CD8-positive, alpha-beta T cell (primary cell): ENCODE measurements at regions of chr3 and their contacts with region 1.

Region 1: GRCh38 chr3:138594150-138594934 is at the start of gene CEP70:
- DNase-seq: peak; percentile 83 to 96 (median 91)
- ATAC-seq: peak; percentile 93
- H3K4me3 ChIP-seq: peak within 1 kb of the TSS; percentile 83 to 93
- H3K4me3 Mint-ChIP-seq: peak within 1 kb of the TSS; percentile 94
- H3K27ac ChIP-seq: peak within 1 kb of the TSS; percentile 90 to 95
- H3K27ac Mint-ChIP-seq: peak within 1 kb of the TSS; percentile 99
- H3K4me1 ChIP-seq: no peaks in the 10 kb centered on the region
- H3K4me1 Mint-ChIP-seq: peaks cover 14% of the 10 kb centered on the region
- H3K27me3 ChIP-seq: no peaks in the 10 kb centered on the region
- H3K27me3 Mint-ChIP-seq: no peaks in the 10 kb centered on the region
- CTCF ChIP-seq: peak; percentile 86
- total RNA-seq, gene CEP70: 29.5 to 31.0 TPM

Region 2: GRCh38 chr3:136861890-136862616 is 1732.3 kb before region 1 on chr3 and contains the start of gene NCK1:
- CTCF ChIA-PET with region 1: no interaction called
- POLR2A ChIA-PET with region 1: no interaction called
- intact Hi-C with region 1: loop called in 1 of 2 experiments (anchors 10 kb)
- DNase-seq: peak; percentile 97 to 100 (median 99)
- ATAC-seq: peak; percentile 93
- H3K4me3 ChIP-seq: peak within 1 kb of the TSS; percentile 76 to 92
- H3K4me3 Mint-ChIP-seq: peak within 1 kb of the TSS; percentile 90
- H3K27ac ChIP-seq: peak within 1 kb of the TSS; percentile 86 to 96
- H3K27ac Mint-ChIP-seq: peak within 1 kb of the TSS; percentile 98
- H3K4me1 ChIP-seq: peaks cover 23% of the 10 kb centered on the region
- H3K4me1 Mint-ChIP-seq: peaks cover 63% of the 10 kb centered on the region
- H3K27me3 ChIP-seq: no peaks in the 10 kb centered on the region
- H3K27me3 Mint-ChIP-seq: no peaks in the 10 kb centered on the region
- CTCF ChIP-seq: no peak
- total RNA-seq, gene NCK1: 54.8 to 68.7 TPM

Region 3: GRCh38 chr3:138329127-138329983 is 265.0 kb before region 1 on chr3 and contains the start of gene NME9:
- CTCF ChIA-PET with region 1: interaction called, 5 read pairs
- POLR2A ChIA-PET with region 1: no interaction called
- intact Hi-C with region 1: loop called (anchors 1 to 5 kb)
- DNase-seq: peak; percentile 82 to 96 (median 92)
- ATAC-seq: peak; percentile 89
- H3K4me3 ChIP-seq: peak within 1 kb of the TSS; percentile 65 to 78
- H3K4me3 Mint-ChIP-seq: peak within 1 kb of the TSS; percentile 98
- H3K27ac ChIP-seq: peak within 1 kb of the TSS; percentile 62 to 74
- H3K27ac Mint-ChIP-seq: peak within 1 kb of the TSS; percentile 94
- H3K4me1 ChIP-seq: peaks cover 6% of the 10 kb centered on the region
- H3K4me1 Mint-ChIP-seq: peaks cover 27% of the 10 kb centered on the region
- H3K27me3 ChIP-seq: no peaks in the 10 kb centered on the region
- H3K27me3 Mint-ChIP-seq: no peaks in the 10 kb centered on the region
- CTCF ChIP-seq: peak; percentile 67
- total RNA-seq, gene NME9: 1.2 TPM in 1 of 2 experiments, not detected in the other

Region 4: GRCh38 chr3:138468886-138469285 is 125.5 kb before region 1 on chr3:
- CTCF ChIA-PET with region 1: no interaction called
- POLR2A ChIA-PET with region 1: no interaction called
- intact Hi-C with region 1: no loop called
- DNase-seq: no peak
- ATAC-seq: no peak
- H3K4me3 ChIP-seq: no peak overlapping the region
- H3K4me3 Mint-ChIP-seq: no peak overlapping the region
- H3K27ac ChIP-seq: no peak overlapping the region
- H3K27ac Mint-ChIP-seq: no peak overlapping the region
- H3K4me1 ChIP-seq: no peaks in the 10 kb centered on the region
- H3K4me1 Mint-ChIP-seq: no peaks in the 10 kb centered on the region
- H3K27me3 ChIP-seq: no peaks in the 10 kb centered on the region
- H3K27me3 Mint-ChIP-seq: no peaks in the 10 kb centered on the region
- CTCF ChIP-seq: no peak

Region 5: DNA sequence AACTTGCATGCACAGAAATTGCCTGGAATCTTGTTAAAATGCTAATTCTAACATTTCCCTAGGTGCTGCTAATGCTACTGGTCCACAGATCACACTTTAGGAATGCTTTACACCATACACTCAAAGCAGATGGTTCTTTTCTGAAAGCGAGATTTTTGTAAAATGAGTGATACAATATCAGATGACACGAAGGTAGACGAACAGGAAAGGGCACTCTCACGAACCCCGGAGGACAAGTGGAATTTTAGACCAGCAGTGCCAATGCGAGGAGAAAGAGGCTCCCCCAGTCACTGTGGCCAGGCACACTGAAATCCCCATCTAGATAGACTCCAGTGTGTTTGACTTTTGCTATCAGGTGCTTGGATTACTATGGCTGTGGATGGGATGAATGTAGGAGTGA is 35.2 kb after region 1 on chr3:
- CTCF ChIA-PET with region 1: no interaction called
- POLR2A ChIA-PET with region 1: no interaction called
- intact Hi-C with region 1: no loop called
- DNase-seq: no peak
- ATAC-seq: no peak
- H3K4me3 ChIP-seq: no peak overlapping the region
- H3K4me3 Mint-ChIP-seq: no peak overlapping the region
- H3K27ac ChIP-seq: no peak overlapping the region
- H3K27ac Mint-ChIP-seq: no peak overlapping the region
- H3K4me1 ChIP-seq: no peaks in the 10 kb centered on the region
- H3K4me1 Mint-ChIP-seq: no peaks in the 10 kb centered on the region
- H3K27me3 ChIP-seq: no peaks in the 10 kb centered on the region
- H3K27me3 Mint-ChIP-seq: no peaks in the 10 kb centered on the region
- CTCF ChIP-seq: no peak

Region 6: GRCh38 chr3:138686771-138687221 is 92.5 kb after region 1 on chr3:
- CTCF ChIA-PET with region 1: interaction called, 10 read pairs
- POLR2A ChIA-PET with region 1: no interaction called
- intact Hi-C with region 1: no loop called
- DNase-seq: peak in 2 of 9 experiments; percentile 23 to 38
- ATAC-seq: no peak
- H3K4me3 ChIP-seq: no peak overlapping the region
- H3K4me3 Mint-ChIP-seq: no peak overlapping the region
- H3K27ac ChIP-seq: peak overlapping the region in 1 of 2 experiments; percentile 17
- H3K27ac Mint-ChIP-seq: peak overlapping the region; percentile 16
- H3K4me1 ChIP-seq: no peaks in the 10 kb centered on the region
- H3K4me1 Mint-ChIP-seq: peaks cover 2% of the 10 kb centered on the region
- H3K27me3 ChIP-seq: no peaks in the 10 kb centered on the region
- H3K27me3 Mint-ChIP-seq: no peaks in the 10 kb centered on the region
- CTCF ChIP-seq: no peak

Region 7: DNA sequence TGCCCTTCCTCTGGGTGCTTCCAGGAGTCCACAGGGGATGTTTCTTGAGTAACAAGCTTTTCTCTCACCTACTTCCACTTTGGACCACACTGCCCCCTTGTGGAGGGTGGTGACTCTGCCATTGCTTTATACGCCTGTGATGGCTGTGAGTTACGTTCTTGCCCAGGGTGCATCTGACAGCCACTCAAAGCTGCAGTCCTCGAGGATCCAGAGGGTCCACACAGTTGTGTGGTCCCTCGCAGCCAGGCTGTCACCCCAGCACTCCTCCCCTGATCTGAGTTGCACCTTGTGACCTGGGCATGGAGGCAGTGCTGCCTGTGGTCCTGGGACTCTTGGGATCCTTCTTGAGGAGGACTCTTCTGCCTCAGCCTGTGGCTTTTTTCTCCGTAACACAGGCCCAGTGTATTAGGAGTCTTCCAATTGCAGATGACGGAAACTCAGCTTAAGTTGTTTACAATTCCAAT is 329.2 kb after region 1 on chr3:
- CTCF ChIA-PET with region 1: interaction called, 214 read pairs
- POLR2A ChIA-PET with region 1: interaction called, 6 read pairs
- intact Hi-C with region 1: loop called in 1 of 2 experiments (anchors 1 kb)
- DNase-seq: peak; percentile 72 to 88 (median 85)
- ATAC-seq: peak; percentile 97
- H3K4me3 ChIP-seq: no peak overlapping the region
- H3K4me3 Mint-ChIP-seq: no peak overlapping the region
- H3K27ac ChIP-seq: no peak overlapping the region
- H3K27ac Mint-ChIP-seq: no peak overlapping the region
- H3K4me1 ChIP-seq: no peaks in the 10 kb centered on the region
- H3K4me1 Mint-ChIP-seq: no peaks in the 10 kb centered on the region
- H3K27me3 ChIP-seq: no peaks in the 10 kb centered on the region
- H3K27me3 Mint-ChIP-seq: peaks cover 15% of the 10 kb centered on the region
- CTCF ChIP-seq: peak; percentile 81

Region 8: DNA sequence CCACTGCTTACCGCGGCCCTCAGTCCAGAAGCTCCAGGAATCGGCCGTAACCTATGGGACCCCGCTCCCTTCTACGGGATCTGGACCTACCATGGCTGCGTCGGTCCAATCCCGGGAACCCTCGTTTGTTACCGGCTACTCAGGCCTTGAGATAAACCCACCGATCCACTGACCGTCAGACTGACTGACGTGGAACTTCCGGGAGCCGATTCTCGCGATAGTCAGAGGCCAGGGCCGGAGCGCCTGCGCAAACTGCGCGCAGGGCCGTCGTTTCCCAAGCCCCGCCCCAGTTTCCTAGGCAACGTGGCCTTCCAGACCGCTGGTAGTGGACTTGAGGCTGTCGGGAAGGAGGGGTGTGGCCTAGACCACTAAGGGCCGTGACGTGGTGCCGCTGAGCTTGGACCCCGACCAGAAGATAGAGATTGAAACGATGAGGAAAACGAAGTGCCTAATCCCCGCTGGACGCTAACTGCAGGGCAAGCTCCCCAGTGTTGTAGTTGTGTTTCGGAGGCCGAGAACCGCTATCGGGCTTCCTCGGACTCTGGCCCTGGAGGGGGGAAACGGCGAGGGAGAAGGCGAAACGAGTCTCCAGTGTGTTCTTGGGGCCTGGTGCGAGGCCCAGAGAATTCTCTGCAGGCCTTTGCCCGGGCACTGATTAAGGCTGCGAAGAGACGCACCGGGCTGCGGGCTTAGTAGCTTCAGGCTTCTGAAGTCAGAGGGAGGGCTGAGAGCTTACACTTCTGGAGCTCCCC is 795.3 kb after region 1 on chr3 and contains the start of gene COPB2:
- CTCF ChIA-PET with region 1: no interaction called
- POLR2A ChIA-PET with region 1: no interaction called
- intact Hi-C with region 1: loop called in 1 of 2 experiments (anchors 1 kb)
- DNase-seq: peak; percentile 92 to 98 (median 96)
- ATAC-seq: peak; percentile 85
- H3K4me3 ChIP-seq: peak within 1 kb of the TSS; percentile 72 to 94
- H3K4me3 Mint-ChIP-seq: peak within 1 kb of the TSS; percentile 100
- H3K27ac ChIP-seq: peak within 1 kb of the TSS; percentile 92 to 95
- H3K27ac Mint-ChIP-seq: peak within 1 kb of the TSS; percentile 99
- H3K4me1 ChIP-seq: peaks cover 18% of the 10 kb centered on the region
- H3K4me1 Mint-ChIP-seq: peaks cover 54% of the 10 kb centered on the region
- H3K27me3 ChIP-seq: no peaks in the 10 kb centered on the region
- H3K27me3 Mint-ChIP-seq: no peaks in the 10 kb centered on the region
- CTCF ChIP-seq: no peak
- total RNA-seq, gene COPB2: 12.8 to 16.4 TPM